MCF 10A (cell line): ENCODE measurements at regions of chr2 and their contacts with region 1.

Region 1: GRCh38 chr2:69741619-69742466 is at the start of gene ANXA4:
- DNase-seq: peak; percentile 91
- H3K4me3 Mint-ChIP-seq: peak within 1 kb of the TSS; percentile 83
- H3K27ac Mint-ChIP-seq: peak within 1 kb of the TSS; percentile 97
- H3K4me1 Mint-ChIP-seq: peaks cover 14% of the 10 kb centered on the region
- H3K27me3 Mint-ChIP-seq: no peaks in the 10 kb centered on the region
- CTCF ChIP-seq: no peak
- total RNA-seq, gene ANXA4: 79.8 and 82.9 TPM in 2 replicates

Region 2: GRCh38 chr2:69483696-69484095 is 258.1 kb before region 1 on chr2:
- CTCF ChIA-PET with region 1: no interaction called
- POLR2A ChIA-PET with region 1: no interaction called
- intact Hi-C with region 1: no loop called
- DNase-seq: no peak
- H3K4me3 Mint-ChIP-seq: no peak overlapping the region
- H3K27ac Mint-ChIP-seq: no peak overlapping the region
- H3K4me1 Mint-ChIP-seq: no peaks in the 10 kb centered on the region
- H3K27me3 Mint-ChIP-seq: no peaks in the 10 kb centered on the region
- CTCF ChIP-seq: no peak

Region 3: DNA sequence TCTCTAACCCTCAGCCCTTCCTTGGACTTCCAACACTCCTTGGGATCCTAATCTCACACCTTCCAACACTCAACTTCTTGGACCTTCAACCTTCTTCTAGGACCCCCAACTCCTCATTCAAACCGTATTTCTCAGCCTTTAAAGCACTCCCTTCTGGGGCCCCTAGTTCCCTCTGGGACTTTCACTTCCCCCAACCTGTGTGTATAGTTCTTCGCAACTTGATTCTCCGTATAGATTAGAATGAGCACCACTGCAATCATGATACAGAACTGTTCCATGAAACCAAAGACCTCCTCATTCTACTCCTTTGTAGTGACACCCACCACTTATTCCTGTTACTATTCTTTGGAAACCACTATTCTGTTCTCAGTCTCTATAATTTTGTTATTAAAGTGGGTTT is 242.6 kb before region 1 on chr2:
- CTCF ChIA-PET with region 1: no interaction called
- POLR2A ChIA-PET with region 1: no interaction called
- intact Hi-C with region 1: no loop called
- DNase-seq: no peak
- H3K4me3 Mint-ChIP-seq: no peak overlapping the region
- H3K27ac Mint-ChIP-seq: no peak overlapping the region
- H3K4me1 Mint-ChIP-seq: no peaks in the 10 kb centered on the region
- H3K27me3 Mint-ChIP-seq: no peaks in the 10 kb centered on the region
- CTCF ChIP-seq: no peak

Region 4: DNA sequence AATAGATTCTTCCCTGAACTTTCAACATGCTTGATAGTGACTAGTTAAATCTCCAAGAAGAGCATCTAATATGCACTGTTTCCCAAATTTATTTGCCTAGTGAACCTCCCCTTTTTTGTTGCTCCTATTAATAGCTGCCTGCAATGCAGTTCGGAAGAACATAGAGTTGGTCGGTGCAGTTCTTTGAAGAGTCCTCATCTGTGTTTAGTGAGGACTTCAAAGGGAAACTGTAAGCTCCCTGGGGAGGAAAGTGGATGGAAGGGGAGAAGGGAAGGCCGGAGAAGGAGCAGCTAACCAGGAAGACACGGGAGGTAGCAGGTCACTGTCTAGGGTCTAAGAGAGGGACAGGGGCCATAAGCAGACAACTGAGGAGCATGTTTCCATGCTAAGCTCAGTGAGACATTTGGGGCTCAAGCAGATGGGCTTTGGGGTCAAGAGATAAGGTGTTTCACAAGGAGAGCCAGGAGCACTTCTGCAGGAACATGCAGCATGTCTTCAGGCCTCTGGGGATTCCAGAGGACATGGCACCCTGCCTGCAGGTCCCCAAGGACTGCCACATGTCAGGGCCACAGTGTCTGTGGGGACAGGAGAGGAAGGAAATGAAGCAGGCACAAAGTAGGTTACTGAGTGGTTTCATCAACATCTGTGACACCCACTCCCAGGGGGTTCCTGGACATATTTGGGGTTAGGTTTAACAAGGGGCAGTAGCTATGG is 48.6 kb before region 1 on chr2:
- CTCF ChIA-PET with region 1: no interaction called
- POLR2A ChIA-PET with region 1: no interaction called
- intact Hi-C with region 1: no loop called
- DNase-seq: no peak
- H3K4me3 Mint-ChIP-seq: no peak overlapping the region
- H3K27ac Mint-ChIP-seq: no peak overlapping the region
- H3K4me1 Mint-ChIP-seq: peaks cover 6% of the 10 kb centered on the region
- H3K27me3 Mint-ChIP-seq: no peaks in the 10 kb centered on the region
- CTCF ChIP-seq: no peak

Region 5: GRCh38 chr2:69724540-69725159 is 17.2 kb before region 1 on chr2:
- CTCF ChIA-PET with region 1: interaction called, 44 read pairs
- POLR2A ChIA-PET with region 1: interaction called, 32 read pairs
- intact Hi-C with region 1: no loop called
- DNase-seq: peak; percentile 81
- H3K4me3 Mint-ChIP-seq: peak overlapping the region; percentile 37
- H3K27ac Mint-ChIP-seq: no peak overlapping the region
- H3K4me1 Mint-ChIP-seq: peaks cover 5% of the 10 kb centered on the region
- H3K27me3 Mint-ChIP-seq: no peaks in the 10 kb centered on the region
- CTCF ChIP-seq: peak; percentile 93

Region 6: GRCh38 chr2:69762513-69763497 is 21.0 kb after region 1 on chr2:
- CTCF ChIA-PET with region 1: interaction called, 6 read pairs
- POLR2A ChIA-PET with region 1: interaction called, 107 read pairs
- intact Hi-C with region 1: no loop called
- DNase-seq: no peak
- H3K4me3 Mint-ChIP-seq: no peak overlapping the region
- H3K27ac Mint-ChIP-seq: no peak overlapping the region
- H3K4me1 Mint-ChIP-seq: peaks cover 11% of the 10 kb centered on the region
- H3K27me3 Mint-ChIP-seq: no peaks in the 10 kb centered on the region
- CTCF ChIP-seq: no peak

Region 7: DNA sequence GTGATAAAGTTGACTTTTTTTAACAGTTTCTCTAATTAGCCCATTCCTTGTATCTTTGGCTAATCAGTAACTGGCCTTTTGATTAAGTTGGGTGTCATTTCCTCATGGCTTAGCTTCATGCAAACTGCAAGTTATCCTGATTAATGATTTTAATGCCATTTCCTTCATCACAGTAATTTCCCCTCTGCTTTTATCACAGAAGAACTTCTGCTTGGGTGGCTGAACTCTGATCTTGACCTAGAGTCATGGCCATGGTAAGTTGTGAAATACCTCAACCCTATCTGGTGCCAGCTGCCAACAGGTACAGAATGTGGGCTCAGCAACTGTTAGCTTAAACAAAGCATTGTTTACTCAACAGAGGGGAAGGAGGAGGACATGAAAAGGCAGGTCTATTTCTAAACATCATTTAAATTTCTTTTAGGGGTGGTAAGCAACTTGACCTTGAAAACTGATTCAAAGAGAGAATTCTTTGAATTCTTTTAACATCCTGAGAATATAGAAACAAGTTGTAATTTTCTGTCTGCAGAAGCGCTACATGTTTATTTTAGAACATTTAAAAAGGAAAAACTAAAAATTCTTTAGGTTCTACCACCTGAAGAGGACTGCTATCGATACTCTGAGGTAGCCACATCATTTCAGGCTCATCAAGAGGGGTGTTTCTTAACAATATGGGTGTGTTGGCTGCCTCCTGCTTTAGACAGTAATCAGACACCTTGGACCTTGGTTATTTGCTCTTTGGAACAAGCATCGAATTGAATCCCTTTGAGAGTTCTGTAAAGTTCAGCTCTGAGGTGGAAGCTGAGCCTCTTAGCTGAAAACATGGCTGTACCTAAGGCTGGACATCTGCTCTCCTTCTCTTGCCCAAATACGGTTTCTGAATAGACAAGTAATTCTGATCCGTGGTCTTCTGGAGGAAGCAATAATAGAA is 39.7 kb after region 1 on chr2:
- CTCF ChIA-PET with region 1: interaction called, 3 read pairs
- POLR2A ChIA-PET with region 1: interaction called, 32 read pairs
- intact Hi-C with region 1: no loop called
- DNase-seq: peak; percentile 57
- H3K4me3 Mint-ChIP-seq: no peak overlapping the region
- H3K27ac Mint-ChIP-seq: peak overlapping the region; percentile 10
- H3K4me1 Mint-ChIP-seq: peaks cover 27% of the 10 kb centered on the region
- H3K27me3 Mint-ChIP-seq: no peaks in the 10 kb centered on the region
- CTCF ChIP-seq: no peak

Region 8: GRCh38 chr2:69816923-69817542 is 75.2 kb after region 1 on chr2:
- CTCF ChIA-PET with region 1: interaction called, 14 read pairs
- POLR2A ChIA-PET with region 1: interaction called, 53 read pairs
- intact Hi-C with region 1: loop called (anchors 1 kb)
- DNase-seq: peak; percentile 86
- H3K4me3 Mint-ChIP-seq: no peak overlapping the region
- H3K27ac Mint-ChIP-seq: no peak overlapping the region
- H3K4me1 Mint-ChIP-seq: no peaks in the 10 kb centered on the region
- H3K27me3 Mint-ChIP-seq: no peaks in the 10 kb centered on the region
- CTCF ChIP-seq: peak; percentile 79

Region 9: DNA sequence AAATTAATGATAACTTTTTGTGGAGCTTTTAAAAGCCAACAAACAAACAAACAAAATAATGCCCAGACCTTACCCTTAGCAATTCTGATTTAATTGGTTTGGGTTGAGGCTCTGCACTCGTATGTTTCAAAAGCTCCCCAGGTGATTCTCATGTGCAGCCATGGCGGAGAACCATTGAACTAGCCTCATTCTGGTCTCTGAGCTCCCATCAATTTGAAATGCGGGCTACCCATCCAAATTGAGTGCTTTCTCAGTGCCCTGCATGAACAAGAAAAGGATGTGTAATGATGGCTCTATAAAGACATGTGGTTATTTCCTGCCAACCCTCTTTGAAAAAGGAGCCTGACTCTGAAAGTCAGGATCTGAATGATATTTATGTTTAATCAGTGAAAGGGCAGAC is 181.3 kb after region 1 on chr2:
- CTCF ChIA-PET with region 1: no interaction called
- POLR2A ChIA-PET with region 1: no interaction called
- intact Hi-C with region 1: no loop called
- DNase-seq: no peak
- H3K4me3 Mint-ChIP-seq: no peak overlapping the region
- H3K27ac Mint-ChIP-seq: no peak overlapping the region
- H3K4me1 Mint-ChIP-seq: peaks cover 13% of the 10 kb centered on the region
- H3K27me3 Mint-ChIP-seq: no peaks in the 10 kb centered on the region
- CTCF ChIP-seq: no peak